GM12878 (cell line): ENCODE measurements at regions of chr11 and their contacts with region 1.

Region 1: DNA sequence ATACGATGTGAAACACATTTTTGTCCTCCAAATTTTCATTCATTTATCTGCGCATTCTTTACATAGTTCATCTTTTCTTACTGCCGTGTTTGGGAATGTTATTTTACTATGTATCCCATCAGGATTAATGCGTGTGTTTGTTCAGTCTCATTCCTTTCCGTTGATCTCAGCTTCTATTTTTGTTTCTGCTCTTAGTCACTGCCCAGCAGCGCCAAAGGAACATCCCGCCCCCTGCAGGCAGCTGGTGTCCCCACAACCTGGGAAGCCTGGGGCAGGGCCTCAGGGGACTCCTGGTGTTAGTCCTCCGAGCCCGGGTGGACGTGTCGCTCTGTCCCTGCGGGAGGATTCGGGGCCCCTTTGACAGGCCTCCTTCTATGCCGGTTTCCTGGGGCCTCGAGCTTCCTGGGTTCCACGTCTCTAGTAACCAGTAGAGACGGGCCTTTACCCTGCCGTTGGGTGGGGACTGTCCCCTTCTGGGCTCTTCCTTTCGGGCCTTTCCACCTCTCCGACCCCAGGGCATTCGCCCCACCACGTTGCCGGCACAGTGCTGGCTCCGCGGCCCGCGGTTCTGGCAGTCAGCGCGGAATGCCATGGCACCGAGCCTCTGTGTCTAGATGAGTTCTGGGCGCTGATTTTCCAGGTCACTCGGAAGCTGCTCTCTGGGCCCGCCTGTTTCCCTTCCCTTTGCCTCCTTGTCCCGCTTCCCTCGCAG is 39.8 kb downstream of the WEE1 start:
- DNase-seq: no peak
- ATAC-seq: peak; percentile 70
- H3K4me3 ChIP-seq: peak overlapping the region; percentile 68
- H3K27ac ChIP-seq: peak overlapping the region; percentile 91
- H3K4me1 ChIP-seq: peaks cover 43% of the 10 kb centered on the region
- H3K27me3 ChIP-seq: no peaks in the 10 kb centered on the region
- CTCF ChIP-seq: peak; percentile 94 to 97 (median 96)
- EP300 ChIP-seq: no peak
- POLR2A ChIP-seq: peak; percentile 60
- RAD21 ChIP-seq: peak; percentile 93

Region 2: DNA sequence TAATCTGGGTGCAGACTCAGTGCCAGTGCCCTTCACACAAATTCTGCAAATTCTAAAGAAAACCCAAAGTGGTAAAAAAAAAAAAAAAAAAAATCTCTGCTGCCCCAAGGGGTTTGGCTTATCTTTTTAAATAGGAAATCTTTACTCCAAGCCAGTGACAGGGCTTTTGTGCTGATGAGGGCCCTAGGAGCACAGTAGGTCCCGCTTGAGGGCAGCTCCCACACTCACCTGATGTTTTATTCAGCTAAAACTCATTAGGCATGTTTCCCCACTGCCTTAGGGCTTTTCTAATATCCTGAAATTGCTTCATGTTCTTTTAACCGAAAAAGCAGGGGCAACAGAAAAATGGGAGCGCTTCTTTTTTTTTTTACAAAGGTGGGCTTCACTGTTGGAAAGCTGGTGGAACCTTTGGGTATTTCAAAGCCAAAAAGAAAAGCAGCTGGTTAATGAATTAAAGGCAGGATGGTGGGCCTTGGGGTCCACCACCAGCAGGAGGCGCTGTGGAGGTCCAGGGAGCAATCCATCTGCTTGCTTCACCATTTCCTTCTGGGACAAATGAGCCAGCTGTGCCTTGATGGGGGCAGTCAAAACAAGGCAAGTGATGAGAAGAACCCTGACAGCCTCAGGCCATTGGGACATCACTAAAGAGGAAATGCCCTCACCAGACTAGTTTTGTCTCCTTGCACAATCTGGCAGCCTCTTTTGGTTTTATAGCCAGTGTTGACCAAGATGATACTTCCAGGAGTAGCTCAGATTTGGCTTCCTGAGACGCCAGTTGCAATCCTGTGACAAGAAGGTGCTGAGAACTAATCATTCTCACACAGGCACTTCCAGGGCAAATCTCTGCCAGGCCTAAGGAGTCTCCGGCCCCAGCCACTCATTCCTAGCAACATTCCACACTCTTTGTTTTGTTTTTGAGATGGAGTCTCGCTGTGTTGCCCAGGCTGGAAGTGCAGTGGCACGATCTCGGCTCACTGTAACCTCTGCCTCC is 78.2 kb before region 1 on chr11:
- CTCF ChIA-PET with region 1: interaction called, 107 read pairs
- POLR2A ChIA-PET with region 1: interaction called, 5 read pairs
- RAD21 ChIA-PET with region 1: interaction called, 46 read pairs
- SMC1A ChIA-PET with region 1: interaction called, 69 read pairs
- in situ Hi-C with region 1: no loop called
- intact Hi-C with region 1: loop called (anchors 1 kb)
- DNase-seq: peak; percentile 25
- ATAC-seq: peak; percentile 87
- H3K4me3 ChIP-seq: no peak overlapping the region
- H3K27ac ChIP-seq: no peak overlapping the region
- H3K4me1 ChIP-seq: no peaks in the 10 kb centered on the region
- H3K27me3 ChIP-seq: no peaks in the 10 kb centered on the region
- CTCF ChIP-seq: peak; percentile 79 to 92 (median 86)
- EP300 ChIP-seq: no peak
- POLR2A ChIP-seq: no peak
- RAD21 ChIP-seq: peak; percentile 79

Region 3: DNA sequence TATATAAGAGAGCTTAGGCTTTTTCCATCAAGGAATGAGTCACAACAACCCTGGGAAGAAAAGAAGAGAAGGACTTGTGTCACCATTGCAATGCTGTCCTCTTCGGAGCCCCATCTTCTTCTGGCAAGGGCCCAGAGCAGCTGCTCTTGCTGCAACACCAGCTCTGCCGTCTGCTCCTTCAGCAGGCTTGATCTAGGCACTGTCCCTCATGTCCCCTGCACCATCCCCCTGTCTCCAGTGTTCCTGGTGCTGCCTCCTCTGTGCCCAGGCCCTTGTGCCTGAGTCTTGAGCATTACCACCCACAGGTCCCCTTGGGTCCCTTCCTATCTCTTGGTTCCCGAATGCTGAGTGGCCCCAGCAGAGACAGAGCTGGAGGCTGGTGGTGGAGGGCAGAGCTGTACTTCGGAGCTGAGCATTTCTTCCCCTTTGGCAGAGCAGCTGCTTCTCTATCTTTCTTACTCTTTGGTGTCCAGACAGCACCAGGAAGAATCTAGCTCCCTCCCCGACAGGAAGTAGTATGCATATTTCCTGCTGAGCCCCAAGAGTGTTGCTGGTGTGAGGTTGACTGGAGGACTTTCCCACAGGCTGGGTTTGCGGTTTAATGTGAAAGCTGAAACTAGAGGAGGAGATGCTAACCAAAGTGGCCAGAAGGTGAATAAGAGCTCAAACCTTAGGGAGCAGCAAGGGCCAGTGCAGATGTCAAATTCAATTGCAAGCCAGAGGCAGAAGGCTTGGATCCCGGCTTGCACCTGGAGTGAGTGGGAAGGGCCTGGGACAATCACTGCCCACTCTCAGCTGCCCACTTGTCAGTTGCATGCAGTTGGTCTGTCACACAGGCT is 12.0 kb before region 1 on chr11:
- CTCF ChIA-PET with region 1: interaction called, 45 read pairs
- POLR2A ChIA-PET with region 1: interaction called, 13 read pairs
- RAD21 ChIA-PET with region 1: interaction called, 31 read pairs
- SMC1A ChIA-PET with region 1: interaction called, 30 read pairs
- in situ Hi-C with region 1: no loop called
- intact Hi-C with region 1: no loop called
- DNase-seq: peak; percentile 95
- ATAC-seq: peak; percentile 90
- H3K4me3 ChIP-seq: peak overlapping the region; percentile 64
- H3K27ac ChIP-seq: peak overlapping the region; percentile 87
- H3K4me1 ChIP-seq: peaks cover 40% of the 10 kb centered on the region
- H3K27me3 ChIP-seq: no peaks in the 10 kb centered on the region
- CTCF ChIP-seq: no peak
- EP300 ChIP-seq: peak in 1 of 2 experiments; percentile 60; a peak in 2 of 4 replicates
- POLR2A ChIP-seq: peak; percentile 30; the same call in 1 of the 2 replicates
- RAD21 ChIP-seq: no peak

Region 4: DNA sequence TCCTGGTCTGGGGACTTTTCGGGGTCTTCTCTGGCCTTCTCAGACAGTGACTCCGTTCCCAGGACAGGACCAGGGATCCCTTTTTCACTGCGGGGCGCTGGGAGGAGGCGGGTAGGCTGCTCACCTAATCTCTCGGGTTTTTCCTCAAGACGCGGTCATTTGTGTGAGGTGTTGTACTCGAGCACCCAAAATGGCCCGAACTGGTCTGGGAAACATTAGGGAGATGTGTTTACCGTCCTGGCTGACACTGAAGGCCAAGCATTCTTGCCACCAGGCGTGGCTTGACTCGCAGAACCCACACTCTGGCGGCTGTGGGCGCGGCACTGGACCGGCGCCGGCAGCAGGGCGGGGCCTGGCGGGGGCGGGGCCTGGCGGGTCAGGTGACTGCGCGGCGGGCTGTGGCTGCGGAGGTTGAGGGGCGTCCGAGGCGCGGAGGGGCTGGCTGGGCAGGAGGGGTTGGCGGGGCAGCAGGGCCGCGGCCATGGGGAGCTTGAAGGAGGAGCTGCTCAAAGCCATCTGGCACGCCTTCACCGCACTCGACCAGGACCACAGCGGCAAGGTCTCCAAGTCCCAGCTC is 50.5 kb after region 1 on chr11 and contains the start of gene SWAP70:
- CTCF ChIA-PET with region 1: interaction called, 4 read pairs
- POLR2A ChIA-PET with region 1: no interaction called
- RAD21 ChIA-PET with region 1: interaction called, 3 read pairs
- SMC1A ChIA-PET with region 1: interaction called, 4 read pairs
- in situ Hi-C with region 1: no loop called
- intact Hi-C with region 1: loop called (anchors 2 kb)
- DNase-seq: no peak
- ATAC-seq: peak; percentile 88
- H3K4me3 ChIP-seq: peak within 1 kb of the TSS; percentile 97
- H3K27ac ChIP-seq: peak within 1 kb of the TSS; percentile 86
- H3K4me1 ChIP-seq: peaks cover 26% of the 10 kb centered on the region
- H3K27me3 ChIP-seq: no peaks in the 10 kb centered on the region
- CTCF ChIP-seq: no peak
- EP300 ChIP-seq: no peak
- POLR2A ChIP-seq: peak; percentile 88
- RAD21 ChIP-seq: no peak
- polyA plus RNA-seq, gene SWAP70: 28.7 to 30.9 TPM

Region 5: GRCh38 chr11:9716275-9717039 is 103.2 kb after region 1 on chr11:
- CTCF ChIA-PET with region 1: interaction called, 3 read pairs
- POLR2A ChIA-PET with region 1: no interaction called
- RAD21 ChIA-PET with region 1: interaction called, 4 read pairs
- SMC1A ChIA-PET with region 1: no interaction called
- in situ Hi-C with region 1: no loop called
- intact Hi-C with region 1: loop called (anchors 1 kb)
- DNase-seq: peak; percentile 92
- ATAC-seq: peak; percentile 90
- H3K4me3 ChIP-seq: no peak overlapping the region
- H3K27ac ChIP-seq: peak overlapping the region; percentile 65
- H3K4me1 ChIP-seq: peaks cover 58% of the 10 kb centered on the region
- H3K27me3 ChIP-seq: no peaks in the 10 kb centered on the region
- CTCF ChIP-seq: no peak
- EP300 ChIP-seq: peak in 1 of 2 experiments; percentile 87; a peak in 1 of 4 replicates
- POLR2A ChIP-seq: no peak
- RAD21 ChIP-seq: no peak